Heart right ventricle (tissue), 16 donors: ENCODE measurements at regions of chr5 and their contacts with region 1.

Region 1: GRCh38 chr5:101473483-101473882 is 570.4 kb upstream of the ST8SIA4 start:
- DNase-seq: no peak
- ATAC-seq: no peak
- H3K4me3 ChIP-seq: no peak overlapping the region
- H3K27ac ChIP-seq: no peak overlapping the region
- H3K4me1 ChIP-seq: no peaks in the 10 kb centered on the region
- H3K27me3 ChIP-seq: no peaks in the 10 kb centered on the region
- CTCF ChIP-seq: no peak

Region 2: GRCh38 chr5:101455048-101455447 is 18.4 kb before region 1 on chr5:
- intact Hi-C with region 1: no loop called
- DNase-seq: no peak
- ATAC-seq: no peak
- H3K4me3 ChIP-seq: no peak overlapping the region
- H3K27ac ChIP-seq: no peak overlapping the region
- H3K4me1 ChIP-seq: no peaks in the 10 kb centered on the region
- H3K27me3 ChIP-seq: no peaks in the 10 kb centered on the region
- CTCF ChIP-seq: no peak

Region 3: GRCh38 chr5:101534491-101535110 is 61.1 kb after region 1 on chr5:
- intact Hi-C with region 1: no loop called
- DNase-seq: no peak
- ATAC-seq: no peak
- H3K4me3 ChIP-seq: no peak overlapping the region
- H3K27ac ChIP-seq: no peak overlapping the region
- H3K4me1 ChIP-seq: no peaks in the 10 kb centered on the region
- H3K27me3 ChIP-seq: no peaks in the 10 kb centered on the region
- CTCF ChIP-seq: no peak

Region 4: GRCh38 chr5:101580591-101580990 is 107.1 kb after region 1 on chr5:
- intact Hi-C with region 1: loop called in 1 of 10 experiments (anchors 5 kb)
- DNase-seq: no peak
- ATAC-seq: no peak
- H3K4me3 ChIP-seq: no peak overlapping the region
- H3K27ac ChIP-seq: no peak overlapping the region
- H3K4me1 ChIP-seq: no peaks in the 10 kb centered on the region
- H3K27me3 ChIP-seq: no peaks in the 10 kb centered on the region
- CTCF ChIP-seq: no peak

Region 5: GRCh38 chr5:101806410-101806809 is 332.9 kb after region 1 on chr5:
- intact Hi-C with region 1: no loop called
- DNase-seq: no peak
- ATAC-seq: no peak
- H3K4me3 ChIP-seq: no peak overlapping the region
- H3K27ac ChIP-seq: no peak overlapping the region
- H3K4me1 ChIP-seq: no peaks in the 10 kb centered on the region
- H3K27me3 ChIP-seq: no peaks in the 10 kb centered on the region
- CTCF ChIP-seq: no peak